ENCODE measurements at regions of chr19 and their contacts with region 1.

Region 1: GRCh38 chr19:1266116-1266915 is 2.8 kb upstream of the CIRBP start:
- DNase-seq: peak; percentile 93 to 96 (median 96)
- ATAC-seq: peak; percentile 59
- H3K4me3 ChIP-seq: peak overlapping the region; percentile 13
- H3K4me1 ChIP-seq: peaks cover 69% of the 10 kb centered on the region
- CTCF ChIP-seq: no peak

Region 2: DNA sequence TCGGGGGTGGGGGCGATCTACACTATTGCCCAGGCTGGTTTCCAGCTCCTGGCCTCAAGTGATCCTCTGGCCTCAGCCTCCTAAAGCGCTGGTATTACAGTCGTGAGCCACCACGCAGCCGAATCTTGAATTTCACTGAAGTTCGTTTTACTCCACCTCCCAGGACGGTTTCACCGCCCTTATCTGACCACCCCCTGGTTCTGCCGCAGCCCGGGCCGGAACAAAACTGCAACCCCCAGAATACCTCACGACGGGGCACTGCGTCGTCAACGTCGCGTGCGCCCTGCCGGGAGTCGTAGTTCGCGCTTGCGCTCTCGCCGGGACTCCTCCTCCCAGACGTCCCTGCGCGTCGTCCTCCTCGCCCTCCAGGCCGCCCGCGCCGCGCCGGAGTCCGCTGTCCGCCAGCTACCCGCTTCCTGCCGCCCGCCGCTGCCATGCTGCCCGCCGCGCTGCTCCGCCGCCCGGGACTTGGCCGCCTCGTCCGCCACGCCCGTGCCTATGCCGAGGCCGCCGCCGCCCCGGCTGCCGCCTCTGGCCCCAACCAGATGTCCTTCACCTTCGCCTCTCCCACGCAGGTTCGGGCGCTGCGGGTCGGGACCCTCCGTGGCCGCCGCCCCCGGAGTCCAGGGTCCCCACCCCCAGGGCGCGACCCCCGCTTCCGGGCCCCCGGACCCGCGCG is 24.8 kb before region 1 on chr19 and contains the start of gene ATP5F1D:
- intact Hi-C with region 1: loop called in 1 of 2 experiments (anchors 2 kb)
- DNase-seq: peak; percentile 94 to 97 (median 96)
- ATAC-seq: peak; percentile 73
- H3K4me3 ChIP-seq: peak within 1 kb of the TSS; percentile 91
- H3K4me1 ChIP-seq: peaks cover 55% of the 10 kb centered on the region
- CTCF ChIP-seq: no peak
- total RNA-seq, gene ATP5F1D: 302 to 391 (median 378) TPM

Region 3: DNA sequence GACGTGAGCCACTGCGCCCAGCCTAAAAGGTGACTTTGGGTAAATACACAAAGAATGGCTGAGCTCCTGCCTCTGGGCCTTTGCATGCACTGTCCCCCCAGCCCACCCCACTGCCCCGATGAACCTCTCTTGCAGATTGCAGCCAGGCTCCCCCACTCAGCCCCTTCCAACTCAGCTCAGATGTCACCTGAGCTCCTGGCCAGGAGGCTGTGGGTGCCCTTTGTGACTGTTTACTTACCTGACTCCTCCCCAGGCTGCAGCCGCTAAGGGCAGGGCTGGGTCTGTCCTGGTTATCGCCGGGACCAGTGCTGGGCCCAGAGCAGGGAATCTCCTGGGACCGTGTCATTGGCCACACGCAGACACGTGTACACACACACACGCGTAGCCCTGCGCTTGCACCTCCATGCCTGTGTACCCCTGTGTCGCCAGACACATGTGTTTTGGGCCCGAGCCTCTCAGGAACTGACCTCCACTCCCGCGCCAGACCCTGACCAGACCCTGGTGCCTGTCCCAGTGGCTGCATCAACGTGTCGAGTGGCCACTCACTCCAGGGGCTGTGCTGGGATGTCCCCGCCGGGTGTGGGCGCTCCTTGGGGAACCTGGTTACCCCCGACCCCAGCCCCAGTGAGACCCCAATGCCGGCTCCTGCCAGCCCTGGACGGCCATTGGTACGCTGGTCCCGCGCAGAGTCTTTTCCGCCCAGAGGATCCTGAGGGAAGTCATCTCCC is 38.0 kb after region 1 on chr19:
- intact Hi-C with region 1: no loop called
- DNase-seq: peak in 2 of 3 donors; percentile 72 to 75
- ATAC-seq: peak; percentile 98
- H3K4me3 ChIP-seq: no peak overlapping the region
- H3K4me1 ChIP-seq: peaks cover 9% of the 10 kb centered on the region
- CTCF ChIP-seq: no peak

Measured in mucosa of descending colon (tissue), 3 donors.